Ascending aorta (tissue), 2 donors: ENCODE measurements at regions of chr9 and their contacts with region 1.

Region 1: DNA sequence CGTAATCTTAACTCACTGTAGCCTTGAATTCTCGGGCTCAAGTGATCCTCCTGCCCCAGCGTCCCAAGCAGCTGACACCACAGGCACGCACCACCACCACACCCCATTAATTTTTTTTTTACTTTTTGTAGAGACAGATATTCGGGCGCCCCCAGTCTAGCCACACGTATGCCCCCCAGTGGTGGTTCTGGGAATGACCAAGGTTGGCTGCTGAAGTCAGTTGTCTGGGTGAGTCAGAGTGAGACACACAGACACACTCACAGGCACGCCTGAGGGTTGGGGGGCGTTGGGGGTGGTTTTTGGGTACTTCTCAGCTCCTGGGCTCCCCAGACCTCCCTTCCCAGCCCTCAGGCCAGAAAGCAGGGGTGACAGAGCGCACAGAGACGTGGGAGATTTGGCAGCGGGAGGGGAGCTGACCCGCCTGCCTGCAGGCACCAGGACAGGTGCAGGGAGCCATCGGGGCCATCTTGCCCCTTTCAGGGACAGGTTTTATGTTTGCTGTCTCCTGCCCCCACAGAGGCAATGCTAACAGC is 4.2 kb upstream of the ENTPD8 start:
- DNase-seq: peak in 1 of 2 donors; percentile 91
- H3K4me3 ChIP-seq: no peak overlapping the region
- H3K27ac ChIP-seq: no peak overlapping the region
- H3K4me1 ChIP-seq: peaks cover 0 to 13% of the 10 kb centered on the region in 2 donors
- H3K27me3 ChIP-seq: peaks cover 3% of the 10 kb centered on the region
- CTCF ChIP-seq: peak; percentile 83 to 89 (median 85)

Region 2: DNA sequence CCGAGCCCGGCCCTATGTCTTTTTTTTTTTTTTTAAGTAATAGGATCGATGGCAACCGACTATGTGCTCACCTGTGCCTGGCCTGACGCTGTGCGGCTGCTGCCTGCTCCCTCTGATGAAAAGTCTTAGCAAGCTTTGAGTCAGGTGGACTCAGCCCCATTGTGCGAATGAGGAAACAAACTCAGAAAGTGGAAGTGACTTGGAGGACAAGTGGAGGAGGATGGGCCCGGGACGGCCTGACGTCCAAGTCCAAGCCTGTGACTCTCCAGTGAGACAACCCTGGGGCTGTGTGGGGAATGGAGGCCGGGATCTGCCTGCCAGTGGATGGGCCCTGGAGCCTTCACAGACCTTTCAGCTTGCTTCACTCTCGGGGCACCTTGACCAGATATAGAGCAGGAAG is 80.3 kb before region 1 on chr9:
- intact Hi-C with region 1: no loop called
- DNase-seq: peak in 1 of 2 donors; percentile 53
- H3K4me3 ChIP-seq: no peak overlapping the region
- H3K27ac ChIP-seq: no peak overlapping the region
- H3K4me1 ChIP-seq: peaks cover 0 to 3% of the 10 kb centered on the region in 2 donors
- H3K27me3 ChIP-seq: no peaks in the 10 kb centered on the region
- CTCF ChIP-seq: no peak

Region 3: DNA sequence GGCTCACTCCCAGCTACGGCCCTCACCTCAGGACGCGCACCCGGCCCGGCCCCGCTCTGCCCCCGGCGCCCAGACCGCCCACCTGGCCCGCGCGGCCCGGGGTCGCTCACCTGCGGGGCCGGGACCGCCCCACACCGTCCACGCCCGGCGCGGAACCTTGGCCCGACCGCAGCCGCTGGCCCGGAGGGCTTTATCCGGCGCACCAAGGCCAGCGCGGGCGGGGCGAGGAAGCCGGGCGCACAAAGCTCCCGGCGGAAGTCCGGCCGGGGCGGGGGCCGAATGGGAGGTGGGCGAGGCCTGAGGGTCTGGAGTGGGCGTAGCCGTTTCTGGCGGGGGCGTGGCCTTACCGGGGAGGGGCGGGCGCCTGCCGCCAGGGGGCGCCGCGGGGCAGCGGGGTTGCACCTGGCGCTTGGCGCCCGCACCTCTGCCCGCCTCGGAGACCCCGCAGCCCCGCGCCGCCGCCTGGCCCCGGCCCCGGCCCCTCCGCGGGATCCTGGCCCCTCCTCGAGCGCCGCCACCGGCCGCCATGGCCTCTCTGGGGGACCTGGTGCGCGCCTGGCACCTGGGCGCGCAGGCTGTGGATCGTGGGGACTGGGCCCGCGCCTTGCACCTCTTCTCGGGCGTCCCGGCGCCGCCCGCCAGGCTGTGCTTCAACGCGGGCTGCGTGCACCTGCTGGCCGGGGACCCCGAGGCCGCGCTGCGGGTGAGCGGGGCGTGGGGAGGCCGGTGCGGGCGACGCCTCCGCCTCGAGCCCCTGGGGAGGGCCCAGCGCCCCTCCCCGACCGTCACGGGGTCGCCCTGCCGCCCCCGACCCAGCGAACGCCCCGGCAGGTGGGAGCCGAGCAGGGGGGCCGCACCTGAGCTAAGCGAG is 22.1 kb before region 1 on chr9 and contains the starts of genes EXD3 and NOXA1:
- intact Hi-C with region 1: loop called (anchors 2 kb)
- DNase-seq: peak; percentile 62 to 95
- H3K4me3 ChIP-seq: peak within 1 kb of the TSS; percentile 73 to 100
- H3K27ac ChIP-seq: peak within 1 kb of the TSS; percentile 51 to 87
- H3K4me1 ChIP-seq: peaks cover 7 to 15% of the 10 kb centered on the region in 2 donors
- H3K27me3 ChIP-seq: no peaks in the 10 kb centered on the region
- CTCF ChIP-seq: peak; percentile 60 to 92 (median 68)
- total RNA-seq, gene EXD3: 16.7 TPM
- total RNA-seq, gene NOXA1: 6.9 TPM

Region 4: DNA sequence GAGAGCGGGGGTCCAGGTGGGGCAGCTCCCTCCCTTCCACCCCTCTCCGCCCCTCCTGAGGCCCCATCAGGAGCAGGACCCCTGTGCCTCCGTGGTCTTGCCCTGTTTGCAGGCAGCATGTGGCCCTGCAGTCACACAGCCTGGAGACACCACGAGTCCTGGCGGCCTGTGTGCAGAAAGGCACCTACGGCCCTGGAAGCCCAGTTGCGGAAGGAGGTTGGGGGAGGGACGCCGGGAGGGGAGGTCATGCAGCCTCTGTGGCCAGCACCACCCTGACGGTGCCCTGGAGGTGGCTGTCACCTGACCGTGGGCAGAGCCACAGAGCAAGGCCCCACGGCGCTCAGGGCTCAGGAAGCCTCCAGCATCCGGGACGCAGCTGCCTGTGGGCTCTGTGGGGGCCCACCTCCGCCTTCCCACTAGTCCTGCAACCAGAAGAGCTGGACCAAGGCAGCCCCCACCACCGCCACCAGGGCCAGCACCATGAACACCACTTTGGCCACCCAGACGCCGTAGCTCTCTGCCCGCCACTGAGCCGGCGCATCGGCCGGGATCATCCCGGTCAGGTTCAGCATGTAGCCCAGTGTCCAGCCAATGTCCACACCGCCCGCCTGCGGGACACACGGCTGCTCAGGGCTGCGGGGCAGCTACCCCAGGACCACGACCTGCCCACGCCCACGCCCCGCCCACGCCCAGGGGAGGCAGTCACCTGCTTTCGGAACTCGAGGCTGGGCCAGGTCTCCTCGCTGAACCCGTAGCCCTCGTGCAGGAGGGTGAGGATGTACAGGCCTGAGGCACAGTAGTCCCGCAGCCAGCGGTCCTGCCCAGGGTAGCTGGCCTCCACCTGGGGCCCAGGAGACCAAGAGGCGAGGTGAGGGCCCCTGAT is 10.6 kb before region 1 on chr9:
- intact Hi-C with region 1: no loop called
- DNase-seq: no peak
- H3K4me3 ChIP-seq: no peak overlapping the region
- H3K27ac ChIP-seq: no peak overlapping the region
- H3K4me1 ChIP-seq: peaks cover 6 to 8% of the 10 kb centered on the region in 2 donors
- H3K27me3 ChIP-seq: no peaks in the 10 kb centered on the region
- CTCF ChIP-seq: no peak